WTC11 (cell line): ENCODE measurements at regions of chr1 and their contacts with region 1.

Region 1: GRCh38 chr1:201877877-201878401 is 10.8 kb upstream of the SHISA4 start:
- DNase-seq: peak; percentile 36
- ATAC-seq: peak; percentile 58
- H3K4me3 Mint-ChIP-seq: no peak overlapping the region
- H3K27ac Mint-ChIP-seq: peak overlapping the region; percentile 85; the same call in 1 of the 2 replicates
- H3K4me1 Mint-ChIP-seq: peaks cover 20% of the 10 kb centered on the region
- H3K27me3 Mint-ChIP-seq: no peaks in the 10 kb centered on the region
- CTCF ChIP-seq: peak; percentile 60; the same call in 1 of the 2 replicates

Region 2: DNA sequence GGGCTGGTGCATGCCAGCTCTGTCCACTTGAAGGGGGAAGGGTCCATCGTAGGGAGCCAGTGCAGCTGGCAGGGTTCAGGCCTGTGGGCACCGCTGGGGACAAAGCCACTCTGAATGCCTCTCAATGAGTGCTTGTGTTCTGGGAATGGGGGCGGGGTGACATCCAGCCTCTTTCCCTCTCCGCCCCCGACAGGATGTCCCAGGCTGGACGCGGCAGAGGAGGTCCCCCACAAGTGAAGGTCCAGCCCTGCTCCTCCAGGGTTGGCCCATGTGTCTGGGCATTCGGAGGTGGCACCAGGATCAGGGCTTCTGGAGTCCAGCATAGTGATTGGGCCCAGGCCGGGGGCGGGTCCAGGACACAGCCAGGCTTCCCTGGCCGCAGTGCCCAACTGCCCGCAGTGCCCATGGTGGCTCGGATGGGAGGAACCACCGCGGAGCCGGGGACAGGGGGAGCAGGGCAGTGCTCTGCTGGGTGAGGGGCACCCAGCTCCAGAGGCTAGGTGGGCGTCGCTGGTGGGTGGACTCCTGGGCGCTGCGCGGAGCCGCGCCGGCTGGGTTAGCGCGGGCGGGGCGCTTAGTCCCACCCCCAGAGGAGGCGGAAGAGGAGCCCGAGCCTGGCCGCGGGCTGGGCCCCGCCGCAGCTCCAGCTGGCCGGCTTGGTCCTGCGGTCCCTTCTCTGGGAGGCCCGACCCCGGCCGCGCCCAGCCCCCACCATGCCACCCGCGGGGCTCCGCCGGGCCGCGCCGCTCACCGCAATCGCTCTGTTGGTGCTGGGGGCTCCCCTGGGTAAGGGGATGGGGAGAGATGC is 10.5 kb after region 1 on chr1 and contains the start of gene SHISA4:
- CTCF ChIA-PET with region 1: interaction called, 135 read pairs
- POLR2A ChIA-PET with region 1: no interaction called
- DNase-seq: peak; percentile 63
- ATAC-seq: peak; percentile 67
- H3K4me3 Mint-ChIP-seq: peak within 1 kb of the TSS; percentile 77
- H3K27ac Mint-ChIP-seq: no peak within 1 kb of the TSS
- H3K4me1 Mint-ChIP-seq: peaks cover 17% of the 10 kb centered on the region
- H3K27me3 Mint-ChIP-seq: peaks cover 36% of the 10 kb centered on the region
- CTCF ChIP-seq: no peak
- total RNA-seq, gene SHISA4: 6.3 to 9.9 TPM (median 8.1 TPM) in 3 replicates

Region 3: GRCh38 chr1:201946224-201946908 is 68.4 kb after region 1 on chr1 and contains the start of gene LMOD1:
- CTCF ChIA-PET with region 1: interaction called, 10 read pairs
- POLR2A ChIA-PET with region 1: interaction called, 3 read pairs
- DNase-seq: peak; percentile 91
- ATAC-seq: peak; percentile 85
- H3K4me3 Mint-ChIP-seq: peak within 1 kb of the TSS; percentile 82
- H3K27ac Mint-ChIP-seq: peak within 1 kb of the TSS; percentile 50
- H3K4me1 Mint-ChIP-seq: peaks cover 40% of the 10 kb centered on the region
- H3K27me3 Mint-ChIP-seq: peaks cover 32% of the 10 kb centered on the region
- CTCF ChIP-seq: no peak
- total RNA-seq, gene LMOD1: 1.5 to 1.9 TPM (median 1.6 TPM) in 3 replicates

Region 4: DNA sequence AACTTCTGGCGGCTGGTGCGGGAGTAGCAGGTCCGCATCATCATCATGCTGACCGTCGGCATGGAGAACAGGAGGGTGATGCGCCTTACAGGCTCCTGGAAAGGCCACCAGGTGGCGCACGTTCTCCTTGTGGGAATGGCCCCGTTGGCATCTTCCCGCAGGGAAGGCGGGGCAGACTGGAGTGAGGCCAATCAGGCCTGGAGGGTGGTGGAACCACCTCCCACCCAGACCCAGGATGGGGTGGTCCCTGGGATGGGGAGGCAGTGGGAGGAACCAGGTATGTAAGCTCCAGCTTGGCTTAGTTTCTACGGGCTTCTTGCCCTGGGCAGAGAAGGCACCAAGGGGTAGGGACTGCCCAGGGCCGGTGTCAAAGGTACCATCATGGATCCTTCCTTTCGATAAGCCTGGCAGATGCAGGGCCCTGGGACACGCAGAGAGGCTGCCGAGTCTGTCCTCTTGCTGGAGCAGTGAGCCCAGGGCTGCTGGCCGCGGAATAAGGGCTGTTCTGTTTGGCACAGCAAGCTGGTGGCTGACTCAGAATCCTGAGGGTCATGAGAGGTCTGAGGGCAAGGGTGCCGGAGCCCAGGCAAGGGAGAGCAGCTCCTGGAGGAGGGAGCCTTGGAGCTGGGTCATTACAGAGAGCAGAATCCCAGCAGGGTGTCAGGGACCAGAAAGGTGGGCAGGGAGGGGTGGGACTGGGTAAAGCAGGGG is 307.0 kb after region 1 on chr1:
- CTCF ChIA-PET with region 1: no interaction called
- POLR2A ChIA-PET with region 1: no interaction called
- DNase-seq: peak; percentile 98
- ATAC-seq: peak; percentile 94
- H3K4me3 Mint-ChIP-seq: peak overlapping the region; percentile 38
- H3K27ac Mint-ChIP-seq: 0 out of 2 replicates have a peak overlapping the region, but pooled peaks have one; percentile 78
- H3K4me1 Mint-ChIP-seq: peaks cover 13% of the 10 kb centered on the region
- H3K27me3 Mint-ChIP-seq: peaks cover 4% of the 10 kb centered on the region; the same call in 1 of the 2 replicates
- CTCF ChIP-seq: peak; percentile 85